ENCODE measurements at regions of chr6 and their contacts with region 1.

Region 1: GRCh38 chr6:45454008-45454911 is 76.5 kb upstream of the SUPT3H start:
- DNase-seq: peak in 1 of 2 experiments; percentile 78
- H3K4me3 ChIP-seq: no peak overlapping the region
- H3K27ac ChIP-seq: peak overlapping the region; percentile 46
- H3K4me1 ChIP-seq: peaks cover 38% of the 10 kb centered on the region
- H3K27me3 ChIP-seq: no peaks in the 10 kb centered on the region
- CTCF ChIP-seq: no peak

Region 2: GRCh38 chr6:45438849-45439406 is 15.3 kb before region 1 on chr6:
- CTCF ChIA-PET with region 1: no interaction called
- POLR2A ChIA-PET with region 1: interaction called, 27 read pairs
- intact Hi-C with region 1: no loop called
- DNase-seq: no peak
- H3K4me3 ChIP-seq: no peak overlapping the region
- H3K27ac ChIP-seq: no peak overlapping the region
- H3K4me1 ChIP-seq: peaks cover 11% of the 10 kb centered on the region
- H3K27me3 ChIP-seq: no peaks in the 10 kb centered on the region
- CTCF ChIP-seq: no peak

Measured in PC-9 (cell line).